ENCODE measurements at regions of chr12 and their contacts with region 1.

Region 1: GRCh38 chr12:116687888-116688287 is 50.0 kb downstream of the SPRING1 start:
- DNase-seq: peak; percentile 86
- ATAC-seq: peak; percentile 98
- H3K4me3 Mint-ChIP-seq: no peak overlapping the region
- H3K27ac Mint-ChIP-seq: no peak overlapping the region
- H3K4me1 Mint-ChIP-seq: peaks cover 10% of the 10 kb centered on the region
- H3K27me3 Mint-ChIP-seq: peaks cover 10% of the 10 kb centered on the region
- CTCF ChIP-seq: peak; percentile 77

Region 2: DNA sequence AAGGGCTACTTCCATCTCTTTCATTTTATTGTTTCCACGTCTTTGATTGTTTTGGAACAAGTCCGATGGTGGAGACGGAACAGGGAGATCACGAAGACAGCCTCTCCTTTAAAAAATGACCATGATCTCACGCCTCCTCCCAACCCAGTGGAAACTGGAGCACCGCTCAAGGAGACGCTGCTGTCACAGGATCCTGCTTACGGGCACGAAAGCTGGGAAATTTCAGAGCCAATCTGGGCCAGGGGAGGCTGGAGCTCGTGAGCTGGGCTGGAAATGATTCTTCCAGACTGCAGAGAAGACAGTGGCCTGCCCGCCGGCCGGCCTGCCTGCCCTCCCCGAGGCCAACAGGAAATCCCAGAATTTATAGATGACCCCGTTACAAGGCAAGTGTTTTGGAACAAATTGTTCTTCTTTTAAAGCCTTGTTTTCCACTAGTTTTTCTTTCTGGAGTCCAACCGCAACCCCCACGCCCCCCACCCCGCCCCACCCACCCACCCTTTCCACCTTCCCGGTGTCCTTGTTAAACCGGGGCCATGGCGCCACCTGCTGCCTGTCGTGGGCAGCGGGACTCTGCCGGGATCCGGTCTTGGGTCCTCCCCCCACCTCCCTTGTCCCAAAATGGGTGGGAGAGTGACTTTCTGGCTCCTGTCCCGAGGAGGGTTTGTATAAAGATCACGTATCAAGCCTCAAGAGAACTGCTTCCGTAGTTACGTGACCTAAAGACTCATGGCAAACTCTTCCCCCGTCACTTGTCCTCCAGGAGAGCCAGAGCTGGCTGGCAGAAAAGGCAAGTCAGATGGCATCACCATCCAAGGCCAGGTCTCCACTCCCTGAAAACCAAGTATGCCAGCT is 88.4 kb before region 1 on chr12:
- CTCF ChIA-PET with region 1: interaction called, 20 read pairs
- POLR2A ChIA-PET with region 1: no interaction called
- DNase-seq: peak; percentile 86
- ATAC-seq: peak; percentile 83
- H3K4me3 Mint-ChIP-seq: peak overlapping the region; percentile 42
- H3K27ac Mint-ChIP-seq: 0 out of 2 replicates have a peak overlapping the region, but pooled peaks have one; percentile 48
- H3K4me1 Mint-ChIP-seq: peaks cover 40% of the 10 kb centered on the region
- H3K27me3 Mint-ChIP-seq: no peaks in the 10 kb centered on the region
- CTCF ChIP-seq: peak; percentile 62

Region 3: GRCh38 chr12:116637589-116638150 is 50.2 kb before region 1 on chr12:
- CTCF ChIA-PET with region 1: no interaction called
- POLR2A ChIA-PET with region 1: no interaction called
- DNase-seq: no peak
- ATAC-seq: no peak
- H3K4me3 Mint-ChIP-seq: no peak overlapping the region
- H3K27ac Mint-ChIP-seq: no peak overlapping the region
- H3K4me1 Mint-ChIP-seq: peaks cover 5% of the 10 kb centered on the region
- H3K27me3 Mint-ChIP-seq: no peaks in the 10 kb centered on the region
- CTCF ChIP-seq: no peak

Region 4: DNA sequence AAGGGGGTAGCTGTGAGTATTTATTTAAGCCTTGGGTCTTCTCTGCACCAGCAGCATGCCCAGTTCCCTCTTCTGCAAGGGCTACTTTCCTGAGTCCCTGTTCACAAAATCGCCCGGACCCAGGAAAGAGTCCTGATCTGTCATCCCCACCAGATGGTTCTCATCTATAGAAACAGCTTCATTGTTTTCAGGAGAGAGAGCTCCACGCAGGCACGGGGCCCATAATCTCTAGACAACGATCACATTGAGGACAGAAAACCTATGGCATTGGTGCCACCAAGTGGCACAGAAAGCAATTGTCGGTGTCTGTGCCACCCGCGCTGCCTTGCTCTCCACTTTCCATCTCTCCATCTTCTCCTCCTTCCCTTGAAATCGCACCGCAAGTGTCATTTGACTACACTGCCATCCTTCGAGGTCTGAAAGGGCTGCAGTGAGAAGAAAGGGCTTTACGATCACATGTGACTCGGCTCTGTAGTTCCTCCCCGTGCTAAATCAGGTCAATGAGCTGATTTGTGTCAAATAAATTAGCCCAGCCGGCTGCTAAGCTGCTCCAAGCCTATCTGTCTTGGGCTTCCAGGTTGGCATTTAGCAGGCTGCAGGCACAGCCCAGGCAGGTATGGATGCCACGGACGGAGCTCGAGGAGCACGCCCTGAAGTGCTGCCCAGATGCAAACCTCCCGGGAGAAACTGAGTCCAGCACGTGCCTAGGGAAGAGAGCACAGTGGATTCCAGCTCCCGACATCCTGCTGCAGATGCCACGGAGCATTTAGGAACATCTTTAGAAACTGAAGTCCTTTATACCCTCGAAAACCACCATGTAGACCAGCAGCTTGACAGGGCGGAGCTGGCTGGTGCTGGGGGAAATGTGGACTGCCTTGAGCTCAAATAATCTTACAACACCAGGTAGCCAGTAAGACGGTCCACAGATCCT is 21.2 kb after region 1 on chr12:
- CTCF ChIA-PET with region 1: interaction called, 12 read pairs
- POLR2A ChIA-PET with region 1: no interaction called
- DNase-seq: no peak
- ATAC-seq: peak; percentile 73
- H3K4me3 Mint-ChIP-seq: no peak overlapping the region
- H3K27ac Mint-ChIP-seq: no peak overlapping the region
- H3K4me1 Mint-ChIP-seq: peaks cover 8% of the 10 kb centered on the region; the same call in 1 of the 2 replicates
- H3K27me3 Mint-ChIP-seq: peaks cover 7% of the 10 kb centered on the region
- CTCF ChIP-seq: no peak

Region 5: DNA sequence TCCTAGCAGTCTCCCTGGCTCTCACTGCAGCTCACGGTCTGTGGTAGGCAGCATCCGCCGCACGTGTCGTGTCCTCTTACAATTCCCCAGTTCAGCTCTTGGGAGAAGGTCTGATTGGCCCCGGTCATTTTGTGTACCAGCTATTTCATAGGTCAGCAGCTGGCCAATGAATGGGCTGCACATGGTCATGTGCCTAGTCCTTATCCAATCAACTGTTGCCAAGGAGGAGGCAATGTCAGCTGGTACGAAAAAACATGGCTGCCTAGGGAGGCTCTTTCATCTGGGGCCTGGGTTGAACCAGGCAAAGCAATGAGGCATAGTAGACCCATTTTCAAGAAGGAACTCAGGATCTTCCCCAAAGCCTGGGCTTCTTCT is 96.3 kb after region 1 on chr12:
- CTCF ChIA-PET with region 1: no interaction called
- POLR2A ChIA-PET with region 1: no interaction called
- DNase-seq: no peak
- ATAC-seq: peak; percentile 71
- H3K4me3 Mint-ChIP-seq: no peak overlapping the region
- H3K27ac Mint-ChIP-seq: no peak overlapping the region
- H3K4me1 Mint-ChIP-seq: no peaks in the 10 kb centered on the region
- H3K27me3 Mint-ChIP-seq: no peaks in the 10 kb centered on the region
- CTCF ChIP-seq: no peak

Region 6: DNA sequence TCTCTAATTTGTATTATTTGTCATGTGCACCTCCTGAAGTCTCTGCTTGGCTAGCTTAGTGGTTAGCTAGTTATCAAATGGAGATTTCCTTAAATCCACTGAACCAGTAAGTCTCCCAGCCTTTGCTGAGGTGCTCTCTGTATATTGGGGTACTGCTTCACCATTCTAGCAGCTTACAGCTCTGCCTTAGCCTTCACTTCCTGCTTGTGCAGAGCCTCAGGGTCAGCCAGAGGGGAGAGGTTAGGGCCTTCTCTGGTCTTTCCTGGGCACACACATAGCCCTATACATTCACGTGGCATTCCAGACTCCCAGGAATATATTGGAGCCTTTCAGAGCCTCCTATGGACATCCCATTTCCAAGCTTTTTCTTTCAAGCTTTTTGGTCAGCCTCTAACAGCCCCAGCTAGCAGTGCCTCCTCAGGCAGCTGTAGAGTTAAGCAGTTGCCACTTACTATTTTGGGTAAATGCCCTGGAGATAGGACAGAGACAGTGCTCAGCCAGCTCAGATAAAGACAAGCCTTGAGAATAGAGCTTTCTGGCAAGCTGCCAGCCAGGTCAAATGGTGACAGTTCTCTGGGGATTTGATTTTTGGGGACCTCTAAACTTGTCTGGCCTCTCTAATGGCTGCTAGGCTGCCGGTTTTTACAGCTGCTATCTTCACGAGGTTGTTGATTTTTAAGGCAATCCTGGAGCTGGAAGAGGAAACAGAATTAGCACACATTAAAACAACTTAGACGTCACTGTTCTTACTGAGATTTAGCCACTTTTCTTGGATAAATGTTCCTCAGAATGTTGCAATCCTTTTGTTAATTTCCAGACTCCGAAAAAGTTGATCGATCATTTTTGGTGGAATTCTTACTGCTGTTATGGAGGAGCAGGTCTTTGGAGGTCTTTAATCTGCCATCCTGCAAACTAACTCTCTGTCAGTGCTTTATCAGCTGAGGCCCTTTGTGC is 255.8 kb after region 1 on chr12:
- CTCF ChIA-PET with region 1: no interaction called
- POLR2A ChIA-PET with region 1: no interaction called
- DNase-seq: no peak
- ATAC-seq: no peak
- H3K4me3 Mint-ChIP-seq: no peak overlapping the region
- H3K27ac Mint-ChIP-seq: no peak overlapping the region
- H3K4me1 Mint-ChIP-seq: no peaks in the 10 kb centered on the region
- H3K27me3 Mint-ChIP-seq: no peaks in the 10 kb centered on the region
- CTCF ChIP-seq: no peak

Measured in WTC11 (cell line).